H1 (cell line): ENCODE measurements at regions of chr18 and their contacts with region 1.

Region 1: DNA sequence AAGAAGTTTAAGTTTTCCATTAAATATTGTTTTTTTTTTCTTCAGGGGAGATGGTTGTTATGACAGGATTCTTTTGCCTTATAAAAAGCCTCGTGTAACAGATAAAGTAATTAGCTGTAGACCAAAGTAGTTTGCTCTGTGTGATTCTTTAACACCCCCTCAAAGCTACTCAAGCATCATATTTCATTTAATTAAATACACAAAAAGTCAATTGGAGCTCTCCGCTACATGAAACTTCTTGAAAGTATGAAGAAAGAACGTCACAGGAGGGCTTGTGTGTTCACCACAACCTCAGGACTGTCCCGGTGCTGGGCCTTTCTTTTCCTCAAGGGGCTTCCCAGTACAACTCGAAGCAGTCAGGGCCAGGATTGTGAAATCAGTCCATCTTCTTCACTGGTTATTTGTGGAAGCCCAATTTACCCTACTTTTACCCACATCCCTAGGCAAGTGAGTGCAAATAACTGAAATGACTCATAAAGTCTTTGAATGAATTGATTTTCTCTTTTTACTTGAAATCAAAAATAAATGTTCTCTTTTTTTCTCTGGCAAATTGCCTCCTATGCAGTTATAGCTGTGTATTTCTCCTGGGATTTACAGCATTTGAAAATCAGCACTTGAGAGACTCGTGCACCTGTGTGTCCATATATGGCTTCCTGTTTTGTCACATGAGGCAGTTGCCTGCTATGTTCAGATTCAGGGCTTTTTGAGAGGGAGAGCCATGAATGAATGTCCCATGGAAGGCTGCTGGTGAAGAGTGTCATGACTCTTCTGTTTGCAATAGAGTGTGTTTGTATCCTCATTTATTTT is 48.6 kb downstream of the LINC00305 start:
- DNase-seq: no peak
- H3K4me3 ChIP-seq: no peak overlapping the region
- H3K27ac ChIP-seq: no peak overlapping the region
- H3K4me1 ChIP-seq: no peaks in the 10 kb centered on the region
- H3K27me3 ChIP-seq: no peaks in the 10 kb centered on the region
- CTCF ChIP-seq: no peak
- EP300 ChIP-seq: no peak
- POLR2A ChIP-seq: no peak
- RAD21 ChIP-seq: peak in 1 of 2 experiments; percentile 4; a peak in 1 of 4 replicates

Region 2: DNA sequence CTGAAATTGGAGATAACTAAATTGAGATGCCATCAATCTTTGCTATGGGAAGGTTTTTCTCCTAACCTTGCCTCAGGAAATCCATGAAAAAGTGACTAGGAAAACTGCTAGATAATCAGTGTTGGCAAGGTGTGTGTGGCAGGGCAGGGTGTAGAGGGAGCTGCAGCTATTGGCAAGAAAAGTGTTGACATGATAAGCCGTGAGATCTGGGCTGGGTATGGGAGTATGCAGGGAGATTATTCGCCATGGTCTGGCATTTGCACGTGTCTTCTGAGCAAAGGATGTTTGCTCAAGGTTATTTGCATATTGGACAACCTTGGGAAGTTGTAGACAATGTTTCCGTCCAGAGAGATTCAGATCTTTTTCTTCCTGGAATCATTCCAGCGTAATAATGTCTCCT is 55.7 kb before region 1 on chr18:
- CTCF ChIA-PET with region 1: no interaction called
- POLR2A ChIA-PET with region 1: no interaction called
- DNase-seq: no peak
- H3K4me3 ChIP-seq: no peak overlapping the region
- H3K27ac ChIP-seq: no peak overlapping the region
- H3K4me1 ChIP-seq: no peaks in the 10 kb centered on the region
- H3K27me3 ChIP-seq: no peaks in the 10 kb centered on the region
- CTCF ChIP-seq: no peak
- EP300 ChIP-seq: no peak
- POLR2A ChIP-seq: no peak
- RAD21 ChIP-seq: no peak

Region 3: DNA sequence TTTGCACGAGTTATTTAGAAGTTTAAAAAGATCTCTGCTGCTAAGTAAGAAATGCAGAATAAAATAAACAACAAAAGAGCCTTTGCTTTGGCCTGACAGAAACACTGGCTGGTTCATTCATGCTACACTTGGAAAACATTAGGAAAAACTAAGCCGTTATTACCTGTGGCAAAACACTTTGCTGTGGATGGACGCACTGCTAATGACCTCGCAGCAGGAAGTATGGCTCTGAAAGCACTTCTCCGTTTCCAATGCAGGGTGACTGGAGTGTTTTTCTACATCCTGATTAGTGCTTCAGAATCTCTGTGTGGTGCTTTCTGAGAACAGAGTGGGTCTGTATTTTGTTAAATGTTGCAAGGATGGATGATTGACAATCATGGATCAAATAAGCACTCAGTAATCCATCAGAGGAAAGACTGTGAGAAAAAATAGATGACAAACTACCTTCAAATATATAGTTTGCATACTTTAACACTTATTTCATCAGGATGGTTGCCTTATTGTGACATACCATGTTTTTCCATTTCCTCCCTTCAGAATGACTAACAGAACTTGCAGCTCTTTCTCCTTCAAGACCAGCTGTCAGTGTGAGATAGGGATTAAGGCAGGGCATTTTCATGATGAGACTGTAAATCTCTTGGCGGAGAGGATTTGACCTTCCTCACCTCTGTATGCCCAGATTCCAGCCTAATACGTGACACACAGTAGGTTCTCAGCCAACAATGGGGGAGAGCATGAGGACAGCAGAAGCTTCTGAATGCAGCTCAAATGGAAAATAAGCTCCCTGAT is 10.6 kb after region 1 on chr18:
- CTCF ChIA-PET with region 1: interaction called, 11 read pairs
- POLR2A ChIA-PET with region 1: no interaction called
- DNase-seq: no peak
- H3K4me3 ChIP-seq: no peak overlapping the region
- H3K27ac ChIP-seq: no peak overlapping the region
- H3K4me1 ChIP-seq: no peaks in the 10 kb centered on the region
- H3K27me3 ChIP-seq: no peaks in the 10 kb centered on the region; a peak in 1 of 7 replicates
- CTCF ChIP-seq: no peak
- EP300 ChIP-seq: no peak
- POLR2A ChIP-seq: no peak
- RAD21 ChIP-seq: no peak

Region 4: GRCh38 chr18:64330161-64330560 is 229.8 kb after region 1 on chr18:
- CTCF ChIA-PET with region 1: interaction called, 61 read pairs
- POLR2A ChIA-PET with region 1: no interaction called
- DNase-seq: no peak
- H3K4me3 ChIP-seq: no peak overlapping the region
- H3K27ac ChIP-seq: no peak overlapping the region
- H3K4me1 ChIP-seq: no peaks in the 10 kb centered on the region
- H3K27me3 ChIP-seq: no peaks in the 10 kb centered on the region
- CTCF ChIP-seq: peak in 2 of 3 experiments; percentile 63 to 73; a peak in 3 of 4 replicates
- EP300 ChIP-seq: no peak
- POLR2A ChIP-seq: no peak
- RAD21 ChIP-seq: peak; percentile 90 to 95